Heart left ventricle (tissue), 16 donors: ENCODE measurements at regions of chr9 and their contacts with region 1.

Region 1: GRCh38 chr9:88722753-88723152 is 187.8 kb downstream of the NXNL2 start:
- DNase-seq: no peak
- ATAC-seq: peak in 3 of 4 donors; percentile 53 to 75 (median 68)
- H3K4me3 ChIP-seq: no peak overlapping the region
- H3K27ac ChIP-seq: no peak overlapping the region
- H3K4me1 ChIP-seq: peaks cover 0 to 8% (median 0%) of the 10 kb centered on the region in 12 donors
- H3K27me3 ChIP-seq: peaks cover 0 to 4% (median 0%) of the 10 kb centered on the region in 9 donors
- CTCF ChIP-seq: peak in 11 of 12 donors; percentile 17 to 51 (median 38)
- POLR2A ChIP-seq: no peak

Region 2: DNA sequence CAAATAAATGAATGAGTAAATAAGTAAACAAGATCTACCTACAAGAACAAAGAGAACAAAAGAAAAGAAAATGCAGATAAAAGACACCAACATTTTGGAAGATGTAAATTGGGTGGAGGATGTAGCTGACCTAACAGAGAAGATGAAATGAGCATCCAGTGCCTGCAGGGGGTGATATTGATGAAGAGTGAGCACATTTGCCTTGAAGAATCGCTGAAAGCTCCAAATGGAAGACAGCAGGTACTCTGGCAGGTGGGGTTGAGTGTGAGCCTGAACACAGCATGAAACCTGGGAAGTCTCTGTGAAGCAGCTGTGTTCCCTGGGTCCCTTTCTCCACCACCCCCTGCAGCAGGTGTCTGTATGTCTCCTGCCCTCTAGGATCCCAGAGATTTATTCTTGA is 62.1 kb before region 1 on chr9:
- intact Hi-C with region 1: no loop called
- DNase-seq: no peak
- ATAC-seq: no peak
- H3K4me3 ChIP-seq: no peak overlapping the region
- H3K27ac ChIP-seq: no peak overlapping the region
- H3K4me1 ChIP-seq: peaks cover 0 to 9% (median 0%) of the 10 kb centered on the region in 12 donors
- H3K27me3 ChIP-seq: no peaks in the 10 kb centered on the region
- CTCF ChIP-seq: peak in 3 of 12 donors; percentile 17 to 24 (median 22)
- POLR2A ChIP-seq: no peak

Region 3: DNA sequence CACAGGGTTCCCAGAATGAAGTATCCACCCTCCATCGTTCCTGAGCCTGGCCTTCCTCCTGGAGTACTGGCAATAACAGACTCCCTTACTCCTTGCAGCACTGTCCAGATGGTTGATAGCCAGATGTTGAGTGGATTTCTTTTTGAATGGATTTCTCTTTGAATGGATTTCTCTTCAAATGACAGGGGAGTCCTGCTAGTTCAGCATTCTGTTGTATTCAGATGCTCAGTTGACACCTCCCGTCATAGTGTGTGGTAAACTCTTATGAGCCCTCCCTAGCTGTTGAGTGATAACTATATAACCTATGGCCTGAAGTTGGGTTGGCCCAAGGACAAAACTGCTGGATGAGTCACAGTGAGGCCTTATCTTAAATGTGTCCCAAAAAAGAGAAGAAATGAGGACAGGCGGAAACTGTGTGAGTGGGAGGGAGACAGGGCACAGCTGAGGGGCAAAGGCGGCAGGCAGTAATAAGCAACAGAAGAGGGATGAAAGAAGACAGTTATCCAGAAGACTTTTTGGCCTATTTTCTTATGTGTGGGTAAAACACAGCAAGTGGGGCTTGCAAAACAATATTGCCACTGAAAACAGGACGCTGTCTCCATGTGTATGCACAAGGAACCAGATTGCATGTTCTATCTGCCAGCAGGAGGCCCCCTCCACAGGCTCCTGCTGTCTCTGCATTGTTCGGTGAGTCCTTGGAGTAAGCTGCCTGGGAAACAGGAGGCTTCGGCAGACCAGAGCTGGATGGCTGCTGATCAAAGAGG is 59.1 kb after region 1 on chr9:
- intact Hi-C with region 1: loop called in 1 of 10 experiments (anchors 10 kb)
- DNase-seq: peak in 4 of 5 donors; percentile 45 to 69 (median 60)
- ATAC-seq: peak; percentile 59 to 84 (median 79)
- H3K4me3 ChIP-seq: no peak overlapping the region
- H3K27ac ChIP-seq: peak overlapping the region; percentile 1 to 72 (median 52)
- H3K4me1 ChIP-seq: peaks cover 0 to 43% (median 27%) of the 10 kb centered on the region in 12 donors
- H3K27me3 ChIP-seq: no peaks in the 10 kb centered on the region
- CTCF ChIP-seq: peak; percentile 23 to 66 (median 49)
- POLR2A ChIP-seq: no peak